ENCODE measurements at regions of chr21 and their contacts with region 1.

Region 1: GRCh38 chr21:34888569-34889319 is 160.4 kb downstream of the RUNX1 start:
- DNase-seq: peak; percentile 93 to 95
- ATAC-seq: peak; percentile 74 to 78
- H3K4me3 ChIP-seq: peak overlapping the region; percentile 69 to 95 (median 72)
- H3K27ac ChIP-seq: peak overlapping the region; percentile 76 to 91 (median 82)
- H3K4me1 ChIP-seq: peaks cover 12 to 30% of the 10 kb centered on the region in 2 donors
- H3K27me3 ChIP-seq: peaks cover 24 to 51% (median 51%) of the 10 kb centered on the region in 3 donors
- CTCF ChIP-seq: peak in 3 of 5 experiments; percentile 9 to 11 (median 10)
- POLR2A ChIP-seq: peak; percentile 94 to 97

Region 2: DNA sequence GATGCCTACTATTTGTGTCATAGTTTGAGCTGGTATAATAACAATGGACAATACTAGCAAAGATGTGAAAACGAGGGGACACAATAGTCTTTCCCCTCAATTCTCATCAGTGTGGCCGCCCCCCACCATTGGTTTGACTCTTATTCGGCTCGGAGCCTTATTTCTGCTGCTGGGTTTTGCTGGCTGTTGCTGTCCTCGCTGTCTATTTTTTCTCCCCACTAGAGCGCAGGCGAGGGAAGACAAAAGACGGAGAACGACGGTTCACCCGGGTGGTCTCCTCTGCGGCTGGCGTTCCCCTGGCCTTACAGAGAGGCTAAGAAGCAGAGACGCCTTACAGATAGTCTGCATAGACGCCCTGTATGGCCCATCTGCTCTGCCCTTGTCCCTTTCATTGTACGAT is 200.6 kb before region 1 on chr21:
- in situ Hi-C with region 1: loop called in 1 of 4 experiments (anchors 10 kb)
- intact Hi-C with region 1: loop called (anchors 2 kb)
- DNase-seq: no peak
- ATAC-seq: no peak
- H3K4me3 ChIP-seq: no peak overlapping the region
- H3K27ac ChIP-seq: peak overlapping the region in 1 of 4 donors; percentile 71
- H3K4me1 ChIP-seq: peaks cover 14 to 33% of the 10 kb centered on the region in 2 donors
- H3K27me3 ChIP-seq: no peaks in the 10 kb centered on the region
- CTCF ChIP-seq: no peak
- POLR2A ChIP-seq: no peak

Region 3: DNA sequence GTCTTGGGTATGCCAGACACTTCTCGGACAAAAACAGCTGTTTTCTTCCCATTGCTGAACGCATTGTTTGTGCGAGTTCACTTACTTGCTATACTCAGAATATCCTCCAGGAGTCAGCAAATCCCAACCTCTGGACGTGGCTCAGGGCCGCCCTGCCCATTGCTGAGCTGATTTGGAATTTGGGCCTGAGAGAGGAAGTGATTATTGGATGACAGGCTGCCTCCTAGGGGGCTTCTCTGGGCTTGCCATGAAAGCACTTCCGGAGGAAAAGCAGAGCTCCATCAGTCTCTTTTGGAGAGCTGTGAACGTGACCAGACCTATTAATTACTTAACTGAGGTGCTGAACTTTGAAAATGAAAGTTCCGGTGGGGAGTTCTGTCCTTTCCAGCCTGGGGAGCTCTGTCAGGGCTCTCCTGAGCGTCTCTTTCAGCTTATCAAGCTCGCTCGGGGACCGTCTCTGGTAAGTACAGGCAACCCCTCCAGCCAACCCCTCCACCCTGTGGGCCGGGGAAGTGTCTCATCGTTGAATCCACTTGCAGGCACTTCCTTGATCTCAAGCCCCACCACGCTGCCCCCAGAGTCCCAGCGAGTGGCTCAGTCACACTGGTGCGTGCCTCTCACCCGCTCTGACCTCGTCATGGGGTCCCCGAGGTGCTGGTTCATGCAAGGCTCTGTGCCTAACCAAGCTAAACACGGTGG is 143.0 kb before region 1 on chr21:
- in situ Hi-C with region 1: loop called in 2 of 4 experiments (anchors 5 to 10 kb)
- intact Hi-C with region 1: loop called (anchors 2 kb)
- DNase-seq: peak; percentile 48 to 61
- ATAC-seq: peak; percentile 87 to 90
- H3K4me3 ChIP-seq: peak overlapping the region in 1 of 4 donors; percentile 36
- H3K27ac ChIP-seq: peak overlapping the region in 1 of 4 donors; percentile 55
- H3K4me1 ChIP-seq: peaks cover 5 to 17% of the 10 kb centered on the region in 2 donors
- H3K27me3 ChIP-seq: no peaks in the 10 kb centered on the region
- CTCF ChIP-seq: peak; percentile 80 to 91 (median 88)
- POLR2A ChIP-seq: no peak

Region 4: GRCh38 chr21:35051287-35051818 is 162.6 kb after region 1 on chr21:
- in situ Hi-C with region 1: no loop called
- intact Hi-C with region 1: loop called (anchors 1 kb)
- DNase-seq: peak; percentile 88 to 94
- ATAC-seq: peak; percentile 76 to 80
- H3K4me3 ChIP-seq: peak overlapping the region in 1 of 4 donors; percentile 26
- H3K27ac ChIP-seq: peak overlapping the region; percentile 81 to 86 (median 84)
- H3K4me1 ChIP-seq: peaks cover 54 to 63% of the 10 kb centered on the region in 2 donors
- H3K27me3 ChIP-seq: no peaks in the 10 kb centered on the region
- CTCF ChIP-seq: peak; percentile 68 to 80 (median 70)
- POLR2A ChIP-seq: peak in 1 of 2 donors; percentile 10

Region 5: GRCh38 chr21:35084869-35085268 is 196.1 kb after region 1 on chr21:
- in situ Hi-C with region 1: no loop called
- intact Hi-C with region 1: no loop called
- DNase-seq: no peak
- ATAC-seq: no peak
- H3K4me3 ChIP-seq: no peak overlapping the region
- H3K27ac ChIP-seq: no peak overlapping the region
- H3K4me1 ChIP-seq: no peaks in the 10 kb centered on the region
- H3K27me3 ChIP-seq: no peaks in the 10 kb centered on the region
- CTCF ChIP-seq: no peak
- POLR2A ChIP-seq: no peak

Region 6: DNA sequence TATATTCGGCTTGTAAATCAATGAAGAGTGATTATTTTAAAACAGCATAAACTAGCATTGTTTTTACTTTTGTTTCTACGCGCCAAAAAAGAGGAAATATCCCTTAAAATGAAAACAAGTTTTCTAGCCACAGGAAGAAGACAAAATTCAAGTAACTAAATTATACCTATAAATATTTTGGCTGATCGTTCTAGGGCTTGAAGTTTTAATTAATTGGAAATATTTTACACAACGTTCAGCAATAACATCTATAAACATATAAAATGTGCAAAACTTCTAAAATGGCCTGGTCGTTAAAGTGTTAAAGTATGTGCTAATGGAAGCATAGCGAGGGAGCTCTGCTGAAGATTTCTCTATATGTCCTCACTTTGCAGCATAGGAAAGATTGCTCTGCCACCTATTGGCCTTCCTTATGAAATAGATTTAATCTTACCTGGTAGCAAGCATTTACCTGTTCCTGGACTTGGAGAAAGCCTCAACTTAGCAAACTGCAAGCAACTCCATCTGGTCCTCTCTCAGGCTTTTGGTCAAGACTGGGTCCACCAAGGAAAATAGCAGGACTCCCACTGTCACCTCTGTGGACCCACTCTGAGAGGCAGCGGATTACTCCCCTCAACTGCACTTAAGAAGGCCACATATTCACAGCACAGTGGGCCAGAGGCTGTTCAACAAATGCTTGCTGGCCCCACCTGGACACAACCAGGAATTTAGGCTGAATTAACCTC is 511.7 kb after region 1 on chr21:
- in situ Hi-C with region 1: loop called in 1 of 4 experiments (anchors 10 kb)
- intact Hi-C with region 1: loop called (anchors 1 kb)
- DNase-seq: peak in 1 of 2 donors; percentile 8
- ATAC-seq: peak; percentile 93 to 98
- H3K4me3 ChIP-seq: no peak overlapping the region
- H3K27ac ChIP-seq: no peak overlapping the region
- H3K4me1 ChIP-seq: peaks cover 0 to 14% of the 10 kb centered on the region in 2 donors
- H3K27me3 ChIP-seq: no peaks in the 10 kb centered on the region
- CTCF ChIP-seq: peak; percentile 54 to 71 (median 59)
- POLR2A ChIP-seq: no peak

Region 7: GRCh38 chr21:35840197-35840799 is 951.6 kb after region 1 on chr21:
- in situ Hi-C with region 1: loop called in 1 of 4 experiments (anchors 10 kb)
- intact Hi-C with region 1: loop called (anchors 1 kb)
- DNase-seq: peak; percentile 26 to 45
- ATAC-seq: peak; percentile 46 to 68
- H3K4me3 ChIP-seq: no peak overlapping the region
- H3K27ac ChIP-seq: peak overlapping the region in 1 of 4 donors; percentile 5
- H3K4me1 ChIP-seq: peaks cover 0 to 4% of the 10 kb centered on the region in 2 donors
- H3K27me3 ChIP-seq: no peaks in the 10 kb centered on the region
- CTCF ChIP-seq: peak; percentile 43 to 78 (median 63)
- POLR2A ChIP-seq: no peak